Left cardiac atrium (tissue), 4 donors: ENCODE measurements at regions of chr4 and their contacts with region 1.

Region 1: DNA sequence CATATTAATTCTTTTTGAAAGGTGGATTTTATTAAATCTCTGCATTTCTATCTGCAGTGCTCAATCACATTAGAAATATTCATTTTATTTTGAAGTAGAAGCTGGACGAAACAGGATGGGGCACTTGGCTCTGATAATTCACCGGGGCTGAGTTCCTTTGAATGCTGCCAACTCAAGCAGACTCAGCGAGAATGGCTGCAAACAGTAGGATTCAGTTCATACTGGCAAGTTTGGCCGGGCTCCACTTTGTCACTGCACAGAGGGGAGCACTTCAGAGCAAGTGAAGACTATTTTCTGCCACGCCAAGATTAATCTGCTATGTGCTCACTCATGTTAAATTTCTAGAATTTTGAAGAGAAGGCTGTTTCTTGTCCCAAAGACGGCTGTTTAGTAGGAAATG is 30.7 kb upstream of the KLHL8 start:
- DNase-seq: peak; percentile 58
- ATAC-seq: peak; percentile 63 to 65

Region 2: GRCh38 chr4:86788826-86789225 is 462.3 kb before region 1 on chr4:
- intact Hi-C with region 1: loop called in 1 of 2 experiments (anchors 10 kb)
- DNase-seq: no peak
- ATAC-seq: no peak

Region 3: GRCh38 chr4:87118826-87119225 is 132.3 kb before region 1 on chr4:
- intact Hi-C with region 1: no loop called
- DNase-seq: no peak
- ATAC-seq: peak in 1 of 2 donors; percentile 9

Region 4: DNA sequence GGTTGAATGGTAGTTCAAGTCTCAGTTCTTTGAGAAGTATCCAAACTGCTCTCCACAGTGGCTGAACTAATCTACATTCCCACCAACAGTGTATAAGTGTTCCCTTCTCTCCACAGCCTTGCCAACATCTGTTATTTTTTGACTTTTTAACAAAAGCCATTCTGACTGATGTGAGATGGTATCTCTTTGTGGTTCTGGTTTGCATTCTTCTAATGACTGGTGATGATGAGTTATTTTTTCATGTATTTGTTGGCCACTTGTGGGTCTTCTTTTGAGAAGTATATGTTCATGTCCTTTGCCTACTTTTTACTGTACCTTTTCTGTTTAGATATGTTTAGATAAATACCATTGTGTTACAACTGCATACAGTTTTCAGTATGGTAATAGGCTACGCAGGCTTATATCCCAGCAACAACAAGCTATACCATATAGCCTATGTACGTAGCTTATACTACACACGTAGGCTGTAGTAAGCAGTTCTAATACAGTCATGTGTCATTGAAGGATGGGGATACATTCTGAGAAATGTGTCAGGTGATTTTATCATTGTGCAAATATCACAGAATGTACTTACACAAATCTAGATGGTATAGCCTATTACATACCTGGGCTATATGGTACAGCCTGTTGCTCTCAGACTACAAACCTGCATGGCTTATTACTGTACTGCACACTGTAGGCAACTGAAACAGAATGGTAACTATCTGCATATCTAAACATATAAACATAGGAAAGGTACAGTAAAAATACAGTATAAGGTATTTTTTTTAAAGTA is 58.8 kb before region 1 on chr4:
- intact Hi-C with region 1: no loop called
- DNase-seq: no peak
- ATAC-seq: no peak